ENCODE measurements at regions of chr3 and their contacts with region 1.

Region 1: GRCh38 chr3:81302045-81302444 is 459.4 kb downstream of the GBE1 start:
- DNase-seq: no peak
- H3K4me3 ChIP-seq: no peak overlapping the region
- CTCF ChIP-seq: peak; percentile 74

Region 2: GRCh38 chr3:81338676-81339555 is 36.9 kb after region 1 on chr3:
- CTCF ChIA-PET with region 1: interaction called, 53 read pairs
- POLR2A ChIA-PET with region 1: no interaction called
- DNase-seq: no peak
- H3K4me3 ChIP-seq: no peak overlapping the region
- CTCF ChIP-seq: peak; percentile 19